Activated naive CD4-positive, alpha-beta T cell treated with anti-CD3 and anti-CD28 coated beads for 36 hours (primary cell): ENCODE measurements at regions of chr4 and their contacts with region 1.

Region 1: GRCh38 chr4:25320773-25321172 is 8.2 kb downstream of the ZCCHC4 start:
- DNase-seq: peak; percentile 18
- H3K4me3 Mint-ChIP-seq: peak overlapping the region; percentile 42
- H3K27ac Mint-ChIP-seq: peak overlapping the region; percentile 76
- H3K4me1 Mint-ChIP-seq: peaks cover 35% of the 10 kb centered on the region
- H3K27me3 Mint-ChIP-seq: no peaks in the 10 kb centered on the region

Region 2: DNA sequence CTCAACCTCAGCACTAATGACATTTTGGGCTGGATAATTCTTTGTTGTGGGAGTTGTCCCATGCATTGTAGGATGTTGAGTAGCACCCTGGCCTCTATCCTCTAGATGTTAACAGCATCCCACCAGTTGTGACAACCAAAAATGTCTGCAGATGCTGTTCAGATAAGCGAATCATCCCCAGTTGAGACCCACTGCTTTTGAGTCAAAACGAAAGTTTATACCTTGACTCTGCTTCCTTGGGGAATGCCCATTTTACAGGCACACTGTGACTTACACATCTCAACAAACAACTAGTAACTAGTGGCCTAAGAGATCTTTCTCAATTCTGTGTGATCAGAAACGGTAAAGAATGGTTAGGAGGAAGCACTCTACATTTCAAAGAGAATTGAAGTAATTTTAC is 197.5 kb before region 1 on chr4:
- CTCF ChIA-PET with region 1: no interaction called
- intact Hi-C with region 1: loop called (anchors 1 kb)
- DNase-seq: peak; percentile 51
- H3K4me3 Mint-ChIP-seq: no peak overlapping the region
- H3K27ac Mint-ChIP-seq: no peak overlapping the region
- H3K4me1 Mint-ChIP-seq: peaks cover 12% of the 10 kb centered on the region
- H3K27me3 Mint-ChIP-seq: no peaks in the 10 kb centered on the region

Region 3: GRCh38 chr4:25330905-25331808 is 10.4 kb after region 1 on chr4:
- CTCF ChIA-PET with region 1: interaction called, 3 read pairs
- intact Hi-C with region 1: loop called (anchors 1 kb)
- DNase-seq: no peak
- H3K4me3 Mint-ChIP-seq: peak overlapping the region; percentile 53
- H3K27ac Mint-ChIP-seq: peak overlapping the region; percentile 62
- H3K4me1 Mint-ChIP-seq: peaks cover 17% of the 10 kb centered on the region
- H3K27me3 Mint-ChIP-seq: no peaks in the 10 kb centered on the region

Region 4: DNA sequence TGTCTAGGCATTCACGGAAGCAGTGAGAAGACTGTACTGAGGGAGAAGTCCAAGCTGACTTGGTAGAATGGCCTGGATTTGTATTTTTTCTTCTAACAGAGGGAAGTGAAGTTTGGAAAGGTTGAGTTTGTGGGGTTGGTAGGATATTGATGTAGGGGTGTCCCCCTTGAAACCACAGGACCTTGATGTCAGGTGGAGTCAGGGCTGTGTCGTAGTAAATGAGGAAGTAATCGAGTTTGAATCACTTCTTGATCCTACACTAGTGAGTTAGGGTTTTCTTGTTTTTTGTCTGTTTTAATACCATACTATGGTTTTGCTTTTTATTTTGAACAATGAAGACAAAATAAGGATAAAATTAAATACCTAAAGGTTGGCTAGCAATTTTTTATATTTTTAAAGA is 26.1 kb after region 1 on chr4:
- CTCF ChIA-PET with region 1: interaction called, 3 read pairs
- intact Hi-C with region 1: loop called (anchors 2 kb)
- DNase-seq: peak; percentile 11
- H3K4me3 Mint-ChIP-seq: no peak overlapping the region
- H3K27ac Mint-ChIP-seq: no peak overlapping the region
- H3K4me1 Mint-ChIP-seq: peaks cover 6% of the 10 kb centered on the region
- H3K27me3 Mint-ChIP-seq: no peaks in the 10 kb centered on the region

Region 5: DNA sequence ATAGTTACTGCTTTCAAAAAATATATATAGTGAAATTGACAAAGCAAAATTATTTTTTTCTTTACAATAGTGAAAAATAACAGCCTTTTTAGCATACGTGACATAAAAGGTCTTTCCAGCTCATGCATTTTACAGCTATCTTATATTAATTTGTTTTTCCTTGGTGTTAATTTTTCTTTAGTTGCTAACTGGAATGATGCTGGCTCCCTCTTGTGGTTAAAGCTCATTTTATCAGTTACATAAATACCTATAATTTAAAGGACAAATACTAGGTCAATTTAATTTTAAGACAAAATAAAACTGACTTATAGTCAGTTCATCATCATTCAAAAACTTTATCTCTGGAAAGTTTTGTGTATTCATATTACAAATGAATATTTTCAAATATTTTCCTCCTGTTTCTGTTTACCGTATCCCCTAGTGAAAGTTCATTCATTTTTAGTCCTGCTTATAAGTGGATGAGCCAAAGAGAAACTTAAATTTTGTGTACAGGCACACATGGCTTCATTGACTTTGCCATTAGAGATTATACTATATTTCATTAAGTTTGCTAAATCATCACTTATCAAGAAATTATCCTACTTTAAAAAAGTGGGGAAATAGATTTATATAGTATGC is 46.3 kb after region 1 on chr4:
- CTCF ChIA-PET with region 1: interaction called, 4 read pairs
- intact Hi-C with region 1: loop called (anchors 2 kb)
- DNase-seq: peak; percentile 12
- H3K4me3 Mint-ChIP-seq: no peak overlapping the region
- H3K27ac Mint-ChIP-seq: no peak overlapping the region
- H3K4me1 Mint-ChIP-seq: no peaks in the 10 kb centered on the region
- H3K27me3 Mint-ChIP-seq: no peaks in the 10 kb centered on the region

Region 6: DNA sequence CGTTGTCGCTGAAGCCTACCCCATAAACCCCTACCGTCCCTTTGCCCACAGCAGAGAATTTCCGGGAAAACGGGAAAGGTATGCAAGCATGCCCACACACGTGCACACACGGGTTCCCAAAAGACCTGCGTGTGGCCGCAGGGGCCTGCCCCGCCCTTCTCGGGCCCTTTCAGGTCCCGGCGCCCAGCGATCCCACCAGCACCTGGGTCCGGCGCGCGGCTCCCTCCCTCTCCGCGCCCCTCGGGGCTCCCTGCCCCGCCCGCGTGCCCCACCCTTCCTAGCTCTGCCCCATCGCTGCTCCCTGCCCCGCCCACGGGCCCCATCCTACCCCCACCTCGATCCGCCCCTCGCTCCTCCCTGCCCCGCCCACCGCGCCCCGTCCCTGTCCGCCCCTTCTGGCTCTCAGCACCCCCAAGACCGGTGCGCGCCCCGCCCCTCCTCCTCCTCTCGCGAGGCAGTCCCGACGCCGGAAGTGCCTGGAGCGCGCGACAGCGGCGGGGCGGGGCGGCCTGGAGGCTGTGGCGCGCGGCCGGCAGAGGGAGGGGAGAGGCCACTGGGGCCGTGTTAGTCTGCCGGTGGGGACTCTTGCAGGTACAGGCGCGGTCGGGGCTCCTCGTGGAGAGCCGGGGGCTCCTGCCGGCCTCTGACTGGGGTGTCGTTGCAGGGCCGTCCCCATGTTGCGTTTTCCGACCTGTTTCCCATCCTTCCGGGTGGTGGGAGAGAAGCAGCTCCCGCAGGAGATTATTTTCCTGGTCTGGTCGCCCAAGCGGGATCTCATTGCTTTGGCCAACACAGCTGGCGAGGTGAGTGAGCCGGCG is 56.2 kb after region 1 on chr4 and contains the start of gene ANAPC4:
- CTCF ChIA-PET with region 1: no interaction called
- intact Hi-C with region 1: loop called (anchors 2 kb)
- DNase-seq: peak; percentile 95
- H3K4me3 Mint-ChIP-seq: no peak within 1 kb of the TSS
- H3K27ac Mint-ChIP-seq: peak within 1 kb of the TSS; percentile 78
- H3K4me1 Mint-ChIP-seq: peaks cover 9% of the 10 kb centered on the region
- H3K27me3 Mint-ChIP-seq: no peaks in the 10 kb centered on the region
- total RNA-seq, gene ANAPC4: 23.1 to 27.3 TPM